ENCODE measurements at regions of chr13 and their contacts with region 1.

Region 1: DNA sequence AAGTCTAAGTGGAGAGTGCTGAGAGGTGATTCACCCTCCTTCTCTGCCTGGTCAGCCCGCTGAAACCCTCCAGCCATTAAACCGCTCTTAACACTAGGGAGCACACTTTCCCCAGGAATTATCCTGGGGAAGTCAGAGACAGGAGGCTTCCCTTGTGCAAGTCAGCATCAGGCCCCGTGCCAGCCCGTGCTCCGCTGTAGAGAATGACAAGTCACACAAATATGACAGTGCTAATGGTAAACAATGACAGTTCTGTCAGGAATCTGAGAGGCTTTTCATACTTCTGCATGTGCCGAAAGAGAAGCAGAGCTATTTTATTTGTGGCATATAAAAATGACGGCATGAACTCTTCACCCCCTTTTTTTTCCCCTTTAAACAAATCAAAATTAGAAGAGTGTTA is 816.9 kb upstream of the SLC10A2 start:
- DNase-seq: peak; percentile 95
- H3K4me3 Mint-ChIP-seq: peak overlapping the region; percentile 57
- H3K27ac Mint-ChIP-seq: no peak overlapping the region
- H3K4me1 Mint-ChIP-seq: peaks cover 5% of the 10 kb centered on the region
- H3K27me3 Mint-ChIP-seq: no peaks in the 10 kb centered on the region
- CTCF ChIP-seq: peak; percentile 60

Region 2: DNA sequence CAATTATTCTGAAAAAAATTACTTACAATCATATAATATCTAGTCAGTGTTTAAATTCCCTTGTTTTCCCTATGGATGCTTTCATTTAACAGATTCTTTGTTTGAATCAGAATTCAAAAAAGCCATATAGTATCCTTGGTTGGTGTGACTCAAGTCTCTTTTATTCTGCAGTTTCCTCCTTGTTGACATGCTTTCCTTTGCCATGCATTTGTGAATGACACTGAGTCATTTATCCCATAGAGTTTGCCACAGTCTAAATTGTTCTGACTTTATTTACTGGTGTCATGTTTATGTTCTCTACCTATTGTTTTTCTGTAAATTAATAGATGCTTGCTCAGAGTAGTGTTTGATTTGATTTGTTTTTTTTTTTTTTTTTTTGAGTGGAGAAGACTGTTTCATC is 76.8 kb after region 1 on chr13:
- CTCF ChIA-PET with region 1: no interaction called
- POLR2A ChIA-PET with region 1: no interaction called
- intact Hi-C with region 1: no loop called
- DNase-seq: no peak
- H3K4me3 Mint-ChIP-seq: no peak overlapping the region
- H3K27ac Mint-ChIP-seq: no peak overlapping the region
- H3K4me1 Mint-ChIP-seq: peaks cover 5% of the 10 kb centered on the region
- H3K27me3 Mint-ChIP-seq: no peaks in the 10 kb centered on the region
- CTCF ChIP-seq: no peak

Region 3: DNA sequence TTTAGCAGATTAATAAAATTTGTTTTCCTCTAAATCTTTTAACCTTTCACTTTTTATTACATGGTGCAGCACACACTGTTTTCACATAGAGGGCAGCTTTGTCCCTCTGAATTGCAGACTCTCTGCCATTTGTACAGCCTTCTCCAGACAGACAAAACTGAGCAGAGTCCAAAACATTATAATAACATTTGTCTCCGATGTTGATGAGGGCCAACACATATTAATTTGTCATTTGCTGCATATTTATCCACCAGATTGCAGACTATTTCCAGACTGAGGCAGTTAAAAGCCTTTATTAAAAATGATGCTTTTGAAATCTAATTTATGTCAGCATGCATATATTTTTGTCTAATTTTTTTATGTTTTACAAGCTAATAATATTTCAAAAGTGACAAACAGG is 435.0 kb after region 1 on chr13:
- CTCF ChIA-PET with region 1: interaction called, 4 read pairs
- POLR2A ChIA-PET with region 1: no interaction called
- intact Hi-C with region 1: loop called (anchors 5 kb)
- DNase-seq: peak; percentile 43
- H3K4me3 Mint-ChIP-seq: no peak overlapping the region
- H3K27ac Mint-ChIP-seq: no peak overlapping the region
- H3K4me1 Mint-ChIP-seq: peaks cover 13% of the 10 kb centered on the region
- H3K27me3 Mint-ChIP-seq: no peaks in the 10 kb centered on the region
- CTCF ChIP-seq: peak; percentile 44